CD8-positive, alpha-beta T cell (primary cell): ENCODE measurements at regions of chr7 and their contacts with region 1.

Region 1: GRCh38 chr7:27745064-27745583 is 5.2 kb downstream of the TAX1BP1 start:
- DNase-seq: peak in 2 of 9 experiments; percentile 11 to 26
- ATAC-seq: no peak
- H3K4me3 ChIP-seq: no peak overlapping the region
- H3K4me3 Mint-ChIP-seq: peak overlapping the region; percentile 16
- H3K27ac ChIP-seq: no peak overlapping the region
- H3K27ac Mint-ChIP-seq: no peak overlapping the region
- H3K4me1 ChIP-seq: peaks cover 28% of the 10 kb centered on the region
- H3K4me1 Mint-ChIP-seq: peaks cover 61% of the 10 kb centered on the region
- H3K27me3 ChIP-seq: no peaks in the 10 kb centered on the region
- H3K27me3 Mint-ChIP-seq: no peaks in the 10 kb centered on the region
- CTCF ChIP-seq: peak; percentile 40

Region 2: DNA sequence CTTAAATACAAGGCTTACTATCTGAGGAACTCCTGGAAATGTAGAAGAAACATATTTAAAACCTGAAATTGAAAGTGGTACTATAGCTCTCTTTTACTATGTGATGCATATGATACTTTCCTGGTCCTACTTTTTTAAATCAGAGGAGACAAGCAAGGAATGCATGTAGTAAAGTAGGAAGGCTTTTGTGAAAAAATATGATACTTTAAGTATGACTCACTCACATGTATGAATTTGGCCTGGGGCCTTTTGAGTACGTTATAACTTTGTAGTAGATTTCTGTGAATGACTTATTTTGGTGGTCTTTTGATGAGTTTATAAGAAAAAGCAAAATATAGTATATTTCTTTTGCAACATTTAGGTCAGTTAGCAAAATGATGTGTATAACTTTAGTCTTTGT is 48.7 kb after region 1 on chr7:
- CTCF ChIA-PET with region 1: no interaction called
- POLR2A ChIA-PET with region 1: interaction called, 3 read pairs
- intact Hi-C with region 1: loop called in 1 of 2 experiments (anchors 5 kb)
- DNase-seq: no peak
- ATAC-seq: no peak
- H3K4me3 ChIP-seq: no peak overlapping the region
- H3K4me3 Mint-ChIP-seq: no peak overlapping the region
- H3K27ac ChIP-seq: no peak overlapping the region
- H3K27ac Mint-ChIP-seq: no peak overlapping the region
- H3K4me1 ChIP-seq: no peaks in the 10 kb centered on the region
- H3K4me1 Mint-ChIP-seq: no peaks in the 10 kb centered on the region
- H3K27me3 ChIP-seq: no peaks in the 10 kb centered on the region
- H3K27me3 Mint-ChIP-seq: no peaks in the 10 kb centered on the region
- CTCF ChIP-seq: no peak